K562 (cell line): ENCODE measurements at regions of chr11 and their contacts with region 1.

Region 1: GRCh38 chr11:94183886-94184264 is 55.2 kb downstream of the PANX1 start:
- DNase-seq: peak; percentile 61 to 80 (median 66)
- ATAC-seq: peak; percentile 96
- H3K4me3 ChIP-seq: no peak overlapping the region
- H3K27ac ChIP-seq: no peak overlapping the region
- H3K4me1 ChIP-seq: no peaks in the 10 kb centered on the region; a peak in 1 of 5 replicates
- H3K27me3 ChIP-seq: no peaks in the 10 kb centered on the region
- CTCF ChIP-seq: peak; percentile 79 to 95 (median 80)
- EP300 ChIP-seq: no peak
- POLR2A ChIP-seq: no peak
- RAD21 ChIP-seq: peak; percentile 62 to 79

Region 2: DNA sequence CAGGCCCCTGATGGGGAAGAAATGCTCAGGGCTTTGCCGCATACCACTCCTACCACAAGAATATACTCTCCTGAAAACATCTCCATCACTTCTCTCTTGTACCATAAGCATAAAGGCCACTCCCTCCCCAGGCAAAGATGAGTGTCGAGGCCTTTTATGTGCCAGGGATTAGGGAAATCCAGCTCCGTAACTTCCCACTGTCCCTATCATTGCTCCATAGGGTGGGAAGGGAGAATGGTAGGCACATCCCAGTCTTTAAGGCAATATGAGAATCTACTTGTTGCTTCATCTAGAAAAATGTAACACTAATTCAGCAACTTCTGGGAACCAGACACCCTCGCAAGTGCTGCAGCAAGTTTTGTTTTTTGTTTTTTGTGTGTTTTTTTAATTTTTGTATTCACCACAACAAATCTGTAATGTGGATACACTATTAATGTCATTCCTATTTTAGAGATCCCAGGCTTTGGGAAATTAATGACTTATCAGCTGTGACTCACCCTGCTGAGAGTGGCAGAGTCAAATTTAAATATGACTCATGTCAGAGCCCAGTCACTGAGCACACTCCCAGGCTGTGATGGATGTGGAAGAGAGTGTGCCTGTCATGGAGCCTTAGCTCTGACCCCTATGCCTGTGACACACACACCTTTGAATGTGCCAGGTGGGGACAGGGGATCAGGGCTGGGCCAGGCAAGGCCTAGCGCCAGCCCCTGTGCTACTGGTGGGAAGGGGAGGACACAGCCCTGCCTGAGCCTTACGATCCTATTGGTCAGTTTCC is 31.8 kb before region 1 on chr11:
- CTCF ChIA-PET with region 1: no interaction called
- POLR2A ChIA-PET with region 1: no interaction called
- in situ Hi-C with region 1: no loop called
- intact Hi-C with region 1: no loop called
- DNase-seq: peak; percentile 66 to 79 (median 70)
- ATAC-seq: peak; percentile 96
- H3K4me3 ChIP-seq: no peak overlapping the region
- H3K27ac ChIP-seq: peak overlapping the region; percentile 45; the same call in 1 of the 3 replicates
- H3K4me1 ChIP-seq: peaks cover 14 to 38% of the 10 kb centered on the region in 2 experiments
- H3K27me3 ChIP-seq: no peaks in the 10 kb centered on the region
- CTCF ChIP-seq: no peak
- EP300 ChIP-seq: no peak; the same call in 1 of the 2 replicates
- POLR2A ChIP-seq: no peak
- RAD21 ChIP-seq: no peak

Region 3: GRCh38 chr11:94376841-94377240 is 193.0 kb after region 1 on chr11:
- CTCF ChIA-PET with region 1: no interaction called
- POLR2A ChIA-PET with region 1: no interaction called
- in situ Hi-C with region 1: no loop called
- intact Hi-C with region 1: no loop called
- DNase-seq: no peak
- ATAC-seq: no peak
- H3K4me3 ChIP-seq: no peak overlapping the region
- H3K27ac ChIP-seq: no peak overlapping the region
- H3K4me1 ChIP-seq: no peaks in the 10 kb centered on the region
- H3K27me3 ChIP-seq: peaks cover 0 to 20% of the 10 kb centered on the region in 2 experiments; a peak in 3 of 5 replicates
- CTCF ChIP-seq: no peak
- EP300 ChIP-seq: no peak
- POLR2A ChIP-seq: no peak
- RAD21 ChIP-seq: no peak

Region 4: DNA sequence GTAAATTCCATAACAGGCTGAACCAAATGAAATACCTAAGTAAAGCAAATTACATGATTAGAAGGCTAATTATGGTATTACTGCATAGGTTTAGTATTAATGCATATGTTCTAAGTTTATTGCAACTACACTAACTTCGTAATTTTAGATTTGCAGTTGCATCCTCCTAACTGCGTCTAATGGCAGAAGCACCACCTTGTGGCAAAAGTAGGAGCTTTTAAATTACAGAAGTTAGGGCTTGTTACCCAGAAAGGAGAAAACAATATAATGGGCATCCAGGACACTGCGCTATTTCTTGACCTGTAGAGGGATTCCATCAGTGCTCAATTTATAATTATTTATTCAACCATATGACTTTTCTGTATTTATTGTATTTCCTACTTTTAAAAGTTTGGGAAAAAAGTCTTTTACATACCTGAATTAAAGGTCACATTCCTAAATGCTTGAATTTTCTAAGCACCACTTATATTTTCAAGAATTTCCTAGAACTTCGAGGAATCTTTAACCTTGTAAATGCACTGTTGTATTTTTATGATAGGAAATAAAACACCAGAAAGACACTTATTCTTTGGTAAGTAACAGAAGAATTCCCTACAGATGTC is 233.6 kb after region 1 on chr11:
- CTCF ChIA-PET with region 1: interaction called, 3 read pairs
- POLR2A ChIA-PET with region 1: no interaction called
- in situ Hi-C with region 1: no loop called
- intact Hi-C with region 1: loop called (anchors 5 kb)
- DNase-seq: peak in 1 of 4 experiments; percentile 22
- ATAC-seq: peak; percentile 79
- H3K4me3 ChIP-seq: no peak overlapping the region
- H3K27ac ChIP-seq: no peak overlapping the region
- H3K4me1 ChIP-seq: no peaks in the 10 kb centered on the region
- H3K27me3 ChIP-seq: no peaks in the 10 kb centered on the region
- CTCF ChIP-seq: peak; percentile 27 to 54 (median 44); a peak in 4 of 6 replicates
- EP300 ChIP-seq: no peak
- POLR2A ChIP-seq: no peak
- RAD21 ChIP-seq: peak; percentile 79 to 80